Uterus (tissue), 4 donors: ENCODE measurements at regions of chr3 and their contacts with region 1.

Region 1: GRCh38 chr3:58177747-58178527 is 32.8 kb downstream of the DNASE1L3 start:
- DNase-seq: peak; percentile 90 to 91
- H3K4me3 ChIP-seq: peak overlapping the region; percentile 37 to 39
- H3K27ac ChIP-seq: peak overlapping the region; percentile 60 to 64
- H3K4me1 ChIP-seq: peaks cover 0 to 15% of the 10 kb centered on the region in 2 donors
- H3K27me3 ChIP-seq: no peaks in the 10 kb centered on the region
- CTCF ChIP-seq: peak; percentile 93 to 96 (median 94)
- POLR2A ChIP-seq: peak in 1 of 2 donors; percentile 7

Region 2: DNA sequence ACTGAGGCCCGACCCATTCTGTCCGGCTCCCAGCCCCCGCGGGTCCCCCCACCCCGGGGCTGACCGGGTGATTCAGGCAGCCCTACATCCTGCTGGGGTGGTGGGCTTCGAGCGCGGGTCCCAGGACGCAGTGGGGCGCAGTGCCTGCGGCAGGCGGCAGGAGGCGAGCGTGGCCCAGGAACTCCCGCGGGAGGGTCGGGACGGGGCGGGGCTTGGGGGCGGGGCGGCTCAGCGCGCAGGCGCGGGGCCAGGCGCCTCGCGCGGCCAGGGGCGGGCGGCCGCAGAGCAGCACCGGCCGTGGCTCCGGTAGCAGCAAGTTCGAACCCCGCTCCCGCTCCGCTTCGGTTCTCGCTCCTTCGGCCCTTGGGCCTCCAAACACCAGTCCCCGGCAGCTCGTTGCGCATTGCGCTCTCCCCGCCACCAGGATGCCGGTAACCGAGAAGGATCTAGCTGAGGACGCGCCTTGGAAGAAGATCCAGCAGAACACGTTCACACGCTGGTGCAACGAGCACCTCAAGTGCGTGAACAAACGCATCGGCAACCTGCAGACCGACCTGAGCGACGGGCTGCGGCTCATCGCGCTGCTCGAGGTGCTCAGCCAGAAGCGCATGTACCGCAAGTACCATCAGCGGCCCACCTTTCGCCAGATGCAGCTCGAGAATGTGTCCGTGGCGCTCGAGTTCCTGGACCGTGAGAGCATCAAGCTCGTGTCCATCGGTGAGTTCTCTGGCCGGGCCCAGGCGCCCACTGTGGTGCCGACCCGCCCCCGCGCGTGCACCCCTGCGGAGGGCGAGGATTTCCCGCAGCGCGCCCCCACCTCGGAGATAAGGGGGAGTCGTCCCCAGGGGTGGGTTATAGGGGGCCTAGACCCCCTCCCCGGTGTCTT is 169.6 kb before region 1 on chr3 and contains the start of gene FLNB:
- intact Hi-C with region 1: loop called (anchors 2 kb)
- DNase-seq: peak; percentile 72 to 75
- H3K4me3 ChIP-seq: peak within 1 kb of the TSS; percentile 71 to 95
- H3K27ac ChIP-seq: peak within 1 kb of the TSS; percentile 83 to 90
- H3K4me1 ChIP-seq: no peaks in the 10 kb centered on the region
- H3K27me3 ChIP-seq: no peaks in the 10 kb centered on the region
- CTCF ChIP-seq: peak; percentile 76 to 98 (median 84)
- POLR2A ChIP-seq: peak; percentile 46 to 88
- total RNA-seq, gene FLNB: 52.4 to 283 (median 148) TPM

Region 3: DNA sequence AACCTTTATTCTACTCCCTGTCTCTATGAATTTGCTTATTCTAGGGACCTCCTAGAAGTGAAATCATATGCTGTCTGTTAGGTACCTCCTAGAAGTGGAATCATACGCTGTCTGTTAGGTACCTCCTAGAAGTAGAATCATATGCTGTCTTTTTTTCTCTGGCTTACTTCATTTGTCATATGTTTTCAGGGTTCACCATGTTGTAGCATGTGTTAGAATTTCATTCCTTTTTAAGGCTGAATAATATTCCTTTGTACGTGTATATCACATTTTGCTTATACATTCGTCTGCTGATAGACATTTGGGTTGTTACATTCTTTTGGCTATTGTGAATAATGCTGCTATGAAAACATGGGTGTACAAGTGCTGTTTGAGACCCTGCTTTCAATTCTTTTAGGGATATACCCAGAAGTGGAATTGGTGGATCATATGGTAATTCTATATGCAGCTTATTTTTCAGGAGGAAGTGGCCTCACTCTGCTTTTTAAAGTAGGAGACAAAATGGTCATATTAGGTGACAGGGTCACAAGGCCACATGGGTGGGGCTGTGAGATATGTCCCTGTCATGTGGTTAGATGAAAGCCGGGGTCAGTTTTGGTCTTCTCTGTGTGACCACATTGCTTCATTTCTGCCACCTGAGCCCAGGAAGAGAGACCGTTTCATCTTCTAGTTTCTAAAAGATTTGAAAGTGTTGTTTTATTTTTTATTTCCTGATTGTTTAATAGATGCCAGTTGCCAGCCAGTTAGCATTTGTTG is 93.0 kb before region 1 on chr3:
- intact Hi-C with region 1: no loop called
- DNase-seq: no peak
- H3K4me3 ChIP-seq: no peak overlapping the region
- H3K27ac ChIP-seq: peak overlapping the region; percentile 1 to 35
- H3K4me1 ChIP-seq: no peaks in the 10 kb centered on the region
- H3K27me3 ChIP-seq: no peaks in the 10 kb centered on the region
- CTCF ChIP-seq: no peak
- POLR2A ChIP-seq: no peak

Region 4: DNA sequence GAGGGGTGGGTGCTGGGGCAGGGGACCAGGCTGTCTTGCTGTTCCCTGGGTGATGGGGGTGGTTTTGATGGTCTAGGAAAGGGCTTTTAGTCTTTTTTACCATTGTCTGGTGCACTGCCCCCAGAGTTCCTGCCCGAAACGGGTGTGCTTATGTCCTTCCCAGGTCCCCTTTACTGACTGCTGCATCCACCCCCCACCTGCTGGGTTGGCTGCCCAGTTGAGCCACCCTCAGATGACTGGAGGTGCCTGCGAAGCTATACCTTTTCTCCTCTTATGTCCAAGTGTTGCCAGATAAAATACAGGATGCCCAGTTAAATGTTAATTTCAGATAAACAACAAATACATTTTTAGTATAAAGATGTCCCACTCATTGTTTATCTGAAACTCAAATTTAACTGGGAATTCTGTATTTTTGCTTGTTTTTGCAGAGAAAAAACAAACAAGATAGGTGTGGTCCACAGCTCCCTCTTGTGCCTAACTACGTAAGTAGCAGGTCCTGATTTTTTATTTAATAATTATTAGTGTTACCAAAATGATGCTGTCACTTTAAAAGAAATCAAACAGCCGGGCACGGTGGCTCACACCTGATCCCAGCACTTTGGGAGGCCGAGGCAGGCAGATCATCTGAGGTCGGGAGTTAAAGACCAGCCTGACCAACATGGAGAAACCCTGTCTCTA is 122.0 kb after region 1 on chr3:
- intact Hi-C with region 1: loop called (anchors 5 kb)
- DNase-seq: no peak
- H3K4me3 ChIP-seq: no peak overlapping the region
- H3K27ac ChIP-seq: no peak overlapping the region
- H3K4me1 ChIP-seq: no peaks in the 10 kb centered on the region
- H3K27me3 ChIP-seq: no peaks in the 10 kb centered on the region
- CTCF ChIP-seq: peak; percentile 48 to 71 (median 61)
- POLR2A ChIP-seq: no peak